ENCODE measurements at regions of chr12 and their contacts with region 1.

Region 1: GRCh38 chr12:1939801-1940607 is 21.6 kb upstream of the CACNA2D4 start:
- DNase-seq: peak; percentile 57
- H3K4me3 ChIP-seq: no peak overlapping the region
- H3K27ac ChIP-seq: no peak overlapping the region
- H3K4me1 ChIP-seq: no peaks in the 10 kb centered on the region
- H3K27me3 ChIP-seq: no peaks in the 10 kb centered on the region
- CTCF ChIP-seq: peak; percentile 90 to 95

Region 2: GRCh38 chr12:1634590-1635191 is 305.3 kb before region 1 on chr12:
- CTCF ChIA-PET with region 1: no interaction called
- dilution Hi-C with region 1: loop called (anchors 25 kb)
- in situ Hi-C with region 1: no loop called
- intact Hi-C with region 1: loop called (anchors 1 kb)
- DNase-seq: peak; percentile 43
- H3K4me3 ChIP-seq: no peak overlapping the region
- H3K27ac ChIP-seq: no peak overlapping the region
- H3K4me1 ChIP-seq: peaks cover 9% of the 10 kb centered on the region
- H3K27me3 ChIP-seq: peaks cover 2% of the 10 kb centered on the region
- CTCF ChIP-seq: peak; percentile 95 to 97

Region 3: DNA sequence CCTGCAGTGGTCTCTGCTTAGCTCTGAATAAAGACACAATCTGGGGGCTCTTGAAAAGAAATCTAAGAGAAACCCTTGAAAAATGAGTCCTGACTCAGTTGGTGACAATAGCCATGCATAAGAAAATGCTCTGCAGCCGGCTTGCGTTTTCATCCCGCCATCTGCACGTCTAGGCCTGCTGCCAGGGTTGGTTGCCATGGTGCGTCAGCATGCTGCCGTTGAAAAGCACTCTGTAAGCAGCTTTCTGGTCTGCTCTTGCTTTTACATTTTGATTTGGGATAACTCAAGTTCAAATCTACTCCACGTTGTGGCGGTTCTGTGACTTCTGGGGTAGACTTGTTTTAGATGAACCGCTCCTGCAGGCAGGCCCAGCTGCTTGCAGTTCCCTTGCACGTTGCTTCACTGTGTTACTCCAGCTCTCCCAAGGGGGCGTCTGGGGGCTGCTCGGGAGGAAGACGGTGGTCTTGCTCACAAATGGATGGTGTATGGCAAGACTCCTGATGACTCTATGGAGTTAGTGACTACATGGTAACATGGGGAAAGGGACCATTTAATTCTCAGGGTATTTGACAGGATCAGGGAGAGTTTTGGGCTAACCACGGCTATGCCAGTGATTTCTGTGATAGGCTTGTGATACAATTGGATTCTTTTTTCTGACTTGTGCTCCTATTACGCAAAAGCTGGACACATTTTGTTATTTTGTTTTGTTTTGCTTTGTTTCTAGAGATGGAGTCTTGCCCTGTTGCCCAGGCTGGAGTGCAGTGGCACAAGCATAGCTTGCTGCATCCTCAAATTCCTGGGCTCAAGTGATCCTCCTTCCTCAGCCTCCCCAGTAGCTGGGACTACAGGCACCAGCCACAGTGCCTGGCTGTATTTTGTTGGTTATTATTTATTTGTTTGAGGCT is 295.2 kb before region 1 on chr12:
- CTCF ChIA-PET with region 1: no interaction called
- dilution Hi-C with region 1: loop called (anchors 25 kb)
- in situ Hi-C with region 1: loop called (anchors 5 to 10 kb)
- intact Hi-C with region 1: no loop called
- DNase-seq: peak; percentile 46
- H3K4me3 ChIP-seq: no peak overlapping the region
- H3K27ac ChIP-seq: no peak overlapping the region
- H3K4me1 ChIP-seq: peaks cover 8% of the 10 kb centered on the region
- H3K27me3 ChIP-seq: no peaks in the 10 kb centered on the region
- CTCF ChIP-seq: no peak

Region 4: DNA sequence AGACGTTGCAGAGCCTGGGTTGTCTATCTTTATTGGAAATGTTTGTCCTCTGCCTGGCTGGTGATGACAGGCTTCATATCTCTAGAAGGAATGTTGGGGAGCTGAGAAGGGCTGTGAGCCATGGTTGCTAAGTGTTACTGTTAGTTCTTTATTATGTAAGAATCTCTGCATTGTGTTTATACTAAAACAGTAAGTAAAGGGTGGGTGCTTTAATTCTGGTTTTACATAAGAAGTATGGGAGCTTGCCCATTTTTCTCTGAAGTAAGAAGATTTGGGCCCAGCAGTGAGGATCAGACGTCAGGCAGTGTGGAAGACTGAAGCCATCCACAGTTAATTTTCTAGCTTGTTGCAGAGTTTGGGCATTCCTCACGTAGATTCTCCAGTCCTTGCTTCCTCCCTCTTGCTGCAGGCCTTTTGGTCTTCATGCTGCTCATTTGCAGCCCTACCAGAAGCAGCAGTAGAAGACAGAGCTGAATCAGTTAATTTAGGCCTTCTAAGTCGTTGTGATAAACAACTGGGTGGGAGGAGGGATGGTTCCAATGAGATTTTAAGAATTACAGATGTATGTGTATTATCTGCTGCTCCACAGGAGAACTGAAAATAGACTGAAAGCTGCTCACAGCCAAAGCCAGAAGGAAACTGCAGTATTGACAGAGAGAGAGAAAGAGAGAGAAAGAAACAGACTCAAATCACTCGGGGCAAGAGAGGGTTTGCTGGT is 289.6 kb before region 1 on chr12:
- CTCF ChIA-PET with region 1: interaction called, 7 read pairs
- dilution Hi-C with region 1: loop called (anchors 25 kb)
- in situ Hi-C with region 1: loop called (anchors 5 to 10 kb)
- intact Hi-C with region 1: loop called (anchors 1 kb)
- DNase-seq: no peak
- H3K4me3 ChIP-seq: no peak overlapping the region
- H3K27ac ChIP-seq: no peak overlapping the region
- H3K4me1 ChIP-seq: no peaks in the 10 kb centered on the region
- H3K27me3 ChIP-seq: no peaks in the 10 kb centered on the region
- CTCF ChIP-seq: no peak